GM13977 (cell line): ENCODE measurements at regions of chr14 and their contacts with region 1.

Region 1: GRCh38 chr14:22472935-22473854 is 115.8 kb downstream of the DAD1 start:
- DNase-seq: peak; percentile 76
- CTCF ChIP-seq: peak; percentile 69

Region 2: GRCh38 chr14:22314181-22314820 is 158.9 kb before region 1 on chr14:
- in situ Hi-C with region 1: loop called (anchors 25 kb)
- DNase-seq: peak; percentile 68
- CTCF ChIP-seq: peak; percentile 69

Region 3: GRCh38 chr14:22561661-22562579 is 88.7 kb after region 1 on chr14:
- in situ Hi-C with region 1: loop called (anchors 10 kb)
- DNase-seq: no peak
- CTCF ChIP-seq: no peak